OCI-LY7 (cell line): ENCODE measurements at regions of chr2 and their contacts with region 1.

Region 1: GRCh38 chr2:217360781-217361482 is 501.1 kb upstream of the TNP1 start:
- DNase-seq: no peak
- H3K4me3 ChIP-seq: no peak overlapping the region
- H3K27ac ChIP-seq: no peak overlapping the region
- H3K4me1 ChIP-seq: no peaks in the 10 kb centered on the region
- CTCF ChIP-seq: no peak

Region 2: DNA sequence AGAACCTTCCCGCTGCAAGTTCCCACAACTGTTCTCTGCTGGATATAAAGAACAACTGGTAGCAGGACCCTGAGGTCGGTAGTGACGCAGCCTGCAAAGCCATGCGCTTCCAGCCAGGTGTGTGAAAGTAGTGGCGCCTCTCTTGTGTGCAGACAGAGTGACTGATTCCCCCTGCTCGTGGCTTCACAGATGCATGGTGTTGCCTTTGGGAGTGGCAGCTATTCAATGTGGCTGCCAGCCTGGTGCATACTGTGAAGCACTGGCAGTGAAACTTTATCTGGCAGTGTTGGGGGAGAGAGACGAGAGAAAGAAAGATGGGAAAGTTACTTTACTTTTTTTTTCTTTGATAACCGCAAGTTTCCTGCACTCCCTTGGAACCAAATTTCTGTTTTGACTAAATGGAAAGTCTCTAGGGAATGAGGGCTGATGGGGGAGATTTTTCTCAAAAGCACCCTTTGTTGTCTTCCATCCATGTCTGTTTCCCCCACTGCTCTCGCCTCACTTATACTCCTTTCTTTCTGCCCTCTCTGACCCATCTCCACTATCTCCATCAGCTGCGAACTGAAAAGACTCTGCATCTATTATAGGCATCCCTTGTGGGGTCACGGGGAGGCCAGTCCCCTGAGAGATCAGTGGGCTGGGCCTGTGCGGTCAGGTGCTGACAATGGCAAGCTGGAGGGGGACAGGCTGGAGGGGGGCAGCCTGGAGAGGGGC is 411.1 kb before region 1 on chr2:
- CTCF ChIA-PET with region 1: no interaction called
- POLR2A ChIA-PET with region 1: interaction called, 10 read pairs
- intact Hi-C with region 1: no loop called
- DNase-seq: no peak
- H3K4me3 ChIP-seq: no peak overlapping the region
- H3K27ac ChIP-seq: no peak overlapping the region
- H3K4me1 ChIP-seq: no peaks in the 10 kb centered on the region
- CTCF ChIP-seq: no peak

Region 3: DNA sequence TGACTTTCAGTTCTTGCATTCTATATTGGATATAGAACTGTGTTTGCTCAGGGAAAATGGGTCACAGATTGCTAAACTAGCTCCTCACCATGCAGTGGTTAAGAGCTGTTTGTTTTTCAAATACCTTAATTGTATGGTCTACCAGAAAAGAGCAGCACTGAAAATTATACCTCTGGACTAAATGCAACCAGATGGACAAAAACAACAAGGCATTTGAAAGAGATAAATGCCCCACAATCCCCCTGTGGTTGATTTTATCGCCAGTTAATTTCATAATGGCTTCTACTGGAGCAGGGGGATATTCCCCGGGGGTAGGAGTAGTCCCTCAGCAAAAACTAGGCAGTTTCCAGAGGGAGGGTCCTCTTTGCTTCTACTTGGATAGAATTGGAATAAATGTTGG is 233.2 kb before region 1 on chr2:
- CTCF ChIA-PET with region 1: no interaction called
- POLR2A ChIA-PET with region 1: no interaction called
- intact Hi-C with region 1: no loop called
- DNase-seq: no peak
- H3K4me3 ChIP-seq: no peak overlapping the region
- H3K27ac ChIP-seq: no peak overlapping the region
- H3K4me1 ChIP-seq: no peaks in the 10 kb centered on the region
- CTCF ChIP-seq: no peak